Activated B cell treated with CpG ODN at 0.5 μM for 24 hours (primary cell): ENCODE measurements at regions of chr1 and their contacts with region 1.

Region 1: DNA sequence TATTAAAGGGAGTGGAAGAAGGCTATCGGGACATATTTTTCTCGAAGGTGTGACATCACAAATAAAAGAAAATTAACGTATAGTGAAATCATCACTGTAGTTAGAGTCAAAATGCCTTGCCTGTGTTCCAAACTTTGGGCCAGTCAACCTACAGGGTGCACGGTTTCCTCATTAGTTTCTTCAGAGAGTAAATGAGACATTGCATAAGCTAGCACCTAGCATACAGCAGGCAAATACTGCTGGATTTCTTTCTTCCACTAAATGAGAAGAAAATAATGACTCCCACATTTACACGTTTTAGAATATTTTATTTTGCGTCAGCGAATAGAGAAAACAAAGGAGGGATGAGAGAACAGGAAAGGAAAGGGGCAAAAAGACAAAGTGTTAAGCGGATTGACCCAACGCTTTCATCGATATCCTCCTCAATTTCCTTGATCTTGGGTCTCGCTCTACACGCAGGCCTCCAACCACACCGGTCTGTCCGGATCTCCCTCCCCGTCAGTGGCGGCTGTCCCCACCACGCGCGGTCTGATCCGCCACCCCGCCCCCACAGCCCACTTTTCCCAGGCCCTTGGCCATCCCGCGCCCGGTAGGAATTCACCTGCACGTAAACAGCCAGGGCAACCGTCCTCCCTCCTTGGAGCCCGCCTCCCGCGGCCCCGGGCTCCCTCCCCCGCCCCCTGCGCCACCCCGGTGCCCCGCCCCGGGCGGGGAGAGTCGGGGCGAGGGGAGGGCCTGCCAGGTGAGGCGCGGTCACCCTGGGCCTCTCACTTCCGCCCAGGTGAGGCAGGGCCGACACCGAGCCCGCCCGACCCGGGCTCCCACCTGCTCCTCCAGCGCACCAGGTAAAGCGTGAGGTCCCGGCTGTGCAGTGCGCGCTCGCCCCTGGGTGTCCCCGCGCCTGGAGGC is at the start of gene PATJ:
- DNase-seq: peak; percentile 64
- ATAC-seq: peak; percentile 91
- H3K4me3 Mint-ChIP-seq: peak within 1 kb of the TSS; percentile 94
- H3K27ac Mint-ChIP-seq: peak within 1 kb of the TSS; percentile 81
- H3K4me1 Mint-ChIP-seq: peaks cover 11% of the 10 kb centered on the region
- H3K27me3 Mint-ChIP-seq: no peaks in the 10 kb centered on the region
- CTCF ChIP-seq: no peak
- total RNA-seq, gene PATJ: 22.5 and 31.2 TPM in 2 replicates

Region 2: GRCh38 chr1:61724813-61725694 is 16.9 kb before region 1 on chr1 and contains the start of gene TM2D1:
- CTCF ChIA-PET with region 1: no interaction called
- POLR2A ChIA-PET with region 1: interaction called, 6 read pairs
- intact Hi-C with region 1: loop called (anchors 1 kb)
- DNase-seq: peak; percentile 81
- ATAC-seq: peak; percentile 97
- H3K4me3 Mint-ChIP-seq: peak within 1 kb of the TSS; percentile 99
- H3K27ac Mint-ChIP-seq: peak within 1 kb of the TSS; percentile 98
- H3K4me1 Mint-ChIP-seq: peaks cover 20% of the 10 kb centered on the region
- H3K27me3 Mint-ChIP-seq: no peaks in the 10 kb centered on the region
- CTCF ChIP-seq: no peak
- total RNA-seq, gene TM2D1: 33.6 and 41.4 TPM in 2 replicates

Region 3: GRCh38 chr1:61782771-61783170 is 40.8 kb after region 1 on chr1:
- CTCF ChIA-PET with region 1: no interaction called
- POLR2A ChIA-PET with region 1: no interaction called
- intact Hi-C with region 1: no loop called
- DNase-seq: no peak
- ATAC-seq: no peak
- H3K4me3 Mint-ChIP-seq: no peak overlapping the region
- H3K27ac Mint-ChIP-seq: no peak overlapping the region
- H3K4me1 Mint-ChIP-seq: no peaks in the 10 kb centered on the region
- H3K27me3 Mint-ChIP-seq: no peaks in the 10 kb centered on the region
- CTCF ChIP-seq: no peak